ENCODE measurements at regions of chr9 and their contacts with region 1.

Region 1: GRCh38 chr9:114587385-114588202 is at the start of gene ATP6V1G1:
- DNase-seq: peak; percentile 100
- H3K4me3 ChIP-seq: peak within 1 kb of the TSS; percentile 73 to 94 (median 83)
- H3K27ac ChIP-seq: peak within 1 kb of the TSS; percentile 90 to 94 (median 94)
- H3K4me1 ChIP-seq: peaks cover 41 to 53% (median 52%) of the 10 kb centered on the region in 4 donors
- H3K27me3 ChIP-seq: no peaks in the 10 kb centered on the region
- CTCF ChIP-seq: peak in 1 of 3 experiments; percentile 13
- EP300 ChIP-seq: no peak
- POLR2A ChIP-seq: peak; percentile 76
- total RNA-seq, gene ATP6V1G1: 88.0 to 135 (median 113) TPM

Region 2: DNA sequence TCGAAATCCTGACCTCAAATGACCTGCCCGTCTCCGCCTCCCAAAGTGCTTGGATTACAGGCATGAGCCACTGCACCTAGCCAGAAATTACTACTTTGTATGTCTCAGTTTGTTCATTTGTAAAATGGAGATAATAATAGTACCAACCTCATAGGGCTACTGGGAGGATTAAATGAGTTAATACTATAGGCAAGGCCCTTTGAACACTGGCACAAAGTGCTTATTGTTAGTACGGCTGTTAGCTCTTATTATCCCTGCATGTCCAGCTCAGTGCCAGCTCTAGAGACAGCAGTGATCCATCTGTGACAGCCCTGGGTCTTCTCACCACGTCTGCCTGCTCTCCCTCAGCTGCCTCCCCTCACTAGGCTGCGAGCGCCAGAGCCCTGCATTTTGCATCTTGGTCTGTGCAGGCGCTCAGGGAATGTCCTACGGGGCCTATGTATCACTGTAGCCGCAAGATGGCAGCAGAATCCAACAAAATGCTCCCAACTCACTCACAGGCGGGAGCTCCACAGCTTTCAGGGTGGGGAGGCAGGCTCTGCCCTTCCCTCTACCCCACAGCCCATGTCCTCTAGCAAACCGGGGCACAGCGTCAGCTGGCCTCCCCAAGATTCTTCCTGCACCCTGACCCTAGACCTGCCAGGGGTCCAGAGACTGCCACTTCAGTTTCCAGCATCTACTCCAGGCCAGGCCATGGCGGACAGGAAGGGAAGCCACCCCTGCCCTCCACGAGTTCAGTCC is 182.1 kb before region 1 on chr9:
- intact Hi-C with region 1: loop called (anchors 10 kb)
- DNase-seq: no peak
- H3K4me3 ChIP-seq: no peak overlapping the region
- H3K27ac ChIP-seq: no peak overlapping the region
- H3K4me1 ChIP-seq: peaks cover 0 to 6% (median 0%) of the 10 kb centered on the region in 4 donors
- H3K27me3 ChIP-seq: no peaks in the 10 kb centered on the region
- CTCF ChIP-seq: peak; percentile 70 to 85 (median 74)
- EP300 ChIP-seq: no peak
- POLR2A ChIP-seq: no peak

Region 3: DNA sequence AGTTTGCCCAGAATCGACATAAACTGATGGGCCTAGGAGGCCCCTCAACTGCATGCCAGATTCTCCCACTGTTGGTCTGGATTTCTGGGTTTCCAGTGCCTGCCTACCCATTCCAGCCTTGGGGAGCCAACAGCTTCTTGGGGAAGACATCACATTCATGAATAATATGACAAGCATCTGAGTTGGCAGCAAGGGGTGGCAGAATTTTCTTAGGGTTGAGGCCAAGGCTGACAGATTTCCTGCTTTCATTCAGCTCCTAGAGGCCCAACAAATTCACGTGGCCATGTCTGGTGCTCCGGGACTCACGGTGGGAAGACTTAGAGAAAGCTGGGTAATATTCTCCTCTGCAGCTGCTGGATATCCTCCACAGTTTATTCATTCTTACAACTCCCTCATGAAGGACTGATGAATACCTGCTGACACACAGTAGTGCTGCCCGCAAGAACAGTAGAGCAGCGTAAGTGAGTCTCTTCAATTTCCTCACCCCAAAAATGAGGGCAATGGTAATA is 835.4 kb after region 1 on chr9:
- intact Hi-C with region 1: no loop called
- DNase-seq: no peak
- H3K4me3 ChIP-seq: no peak overlapping the region
- H3K27ac ChIP-seq: no peak overlapping the region
- H3K4me1 ChIP-seq: no peaks in the 10 kb centered on the region
- H3K27me3 ChIP-seq: no peaks in the 10 kb centered on the region
- CTCF ChIP-seq: no peak
- EP300 ChIP-seq: no peak
- POLR2A ChIP-seq: no peak

Measured in esophagus muscularis mucosa (tissue), 4 donors.